SK-N-SH (cell line): ENCODE measurements at regions of chr16 and their contacts with region 1.

Region 1: GRCh38 chr16:85114909-85115567 is 2.8 kb upstream of the CIBAR2 start:
- DNase-seq: peak; percentile 92
- H3K4me3 ChIP-seq: peak overlapping the region in 1 of 2 experiments; percentile 39; a peak in 1 of 4 replicates
- H3K27ac ChIP-seq: peak overlapping the region; percentile 45 to 61; a peak in 3 of 4 replicates
- H3K4me1 ChIP-seq: peaks cover 0 to 11% of the 10 kb centered on the region in 2 experiments; a peak in 2 of 4 replicates
- H3K27me3 ChIP-seq: no peaks in the 10 kb centered on the region
- CTCF ChIP-seq: peak; percentile 98
- EP300 ChIP-seq: no peak
- RAD21 ChIP-seq: peak; percentile 99

Region 2: GRCh38 chr16:85094812-85095211 is 20.2 kb before region 1 on chr16:
- CTCF ChIA-PET with region 1: interaction called, 14 read pairs
- POLR2A ChIA-PET with region 1: no interaction called
- DNase-seq: peak; percentile 27
- H3K4me3 ChIP-seq: no peak overlapping the region
- H3K27ac ChIP-seq: no peak overlapping the region
- H3K4me1 ChIP-seq: peaks cover 0 to 4% of the 10 kb centered on the region in 2 experiments; a peak in 1 of 4 replicates
- H3K27me3 ChIP-seq: peaks cover 11% of the 10 kb centered on the region
- CTCF ChIP-seq: no peak
- EP300 ChIP-seq: no peak
- RAD21 ChIP-seq: no peak

Region 3: GRCh38 chr16:85137323-85138072 is 22.5 kb after region 1 on chr16:
- CTCF ChIA-PET with region 1: interaction called, 14 read pairs
- POLR2A ChIA-PET with region 1: no interaction called
- DNase-seq: peak; percentile 96
- H3K4me3 ChIP-seq: peak overlapping the region; percentile 29 to 45
- H3K27ac ChIP-seq: peak overlapping the region; percentile 20 to 86; a peak in 3 of 4 replicates
- H3K4me1 ChIP-seq: peaks cover 0 to 25% of the 10 kb centered on the region in 2 experiments; a peak in 3 of 4 replicates
- H3K27me3 ChIP-seq: no peaks in the 10 kb centered on the region
- CTCF ChIP-seq: no peak
- EP300 ChIP-seq: peak in 1 of 2 experiments; percentile 91; a peak in 2 of 4 replicates
- RAD21 ChIP-seq: no peak

Region 4: GRCh38 chr16:85172455-85173145 is 57.6 kb after region 1 on chr16:
- CTCF ChIA-PET with region 1: interaction called, 75 read pairs
- POLR2A ChIA-PET with region 1: no interaction called
- DNase-seq: peak; percentile 83
- H3K4me3 ChIP-seq: peak overlapping the region; percentile 52 to 65
- H3K27ac ChIP-seq: peak overlapping the region; percentile 88 to 97
- H3K4me1 ChIP-seq: peaks cover 26 to 73% of the 10 kb centered on the region in 2 experiments
- H3K27me3 ChIP-seq: no peaks in the 10 kb centered on the region
- CTCF ChIP-seq: peak; percentile 53
- EP300 ChIP-seq: no peak
- RAD21 ChIP-seq: peak; percentile 44

Region 5: DNA sequence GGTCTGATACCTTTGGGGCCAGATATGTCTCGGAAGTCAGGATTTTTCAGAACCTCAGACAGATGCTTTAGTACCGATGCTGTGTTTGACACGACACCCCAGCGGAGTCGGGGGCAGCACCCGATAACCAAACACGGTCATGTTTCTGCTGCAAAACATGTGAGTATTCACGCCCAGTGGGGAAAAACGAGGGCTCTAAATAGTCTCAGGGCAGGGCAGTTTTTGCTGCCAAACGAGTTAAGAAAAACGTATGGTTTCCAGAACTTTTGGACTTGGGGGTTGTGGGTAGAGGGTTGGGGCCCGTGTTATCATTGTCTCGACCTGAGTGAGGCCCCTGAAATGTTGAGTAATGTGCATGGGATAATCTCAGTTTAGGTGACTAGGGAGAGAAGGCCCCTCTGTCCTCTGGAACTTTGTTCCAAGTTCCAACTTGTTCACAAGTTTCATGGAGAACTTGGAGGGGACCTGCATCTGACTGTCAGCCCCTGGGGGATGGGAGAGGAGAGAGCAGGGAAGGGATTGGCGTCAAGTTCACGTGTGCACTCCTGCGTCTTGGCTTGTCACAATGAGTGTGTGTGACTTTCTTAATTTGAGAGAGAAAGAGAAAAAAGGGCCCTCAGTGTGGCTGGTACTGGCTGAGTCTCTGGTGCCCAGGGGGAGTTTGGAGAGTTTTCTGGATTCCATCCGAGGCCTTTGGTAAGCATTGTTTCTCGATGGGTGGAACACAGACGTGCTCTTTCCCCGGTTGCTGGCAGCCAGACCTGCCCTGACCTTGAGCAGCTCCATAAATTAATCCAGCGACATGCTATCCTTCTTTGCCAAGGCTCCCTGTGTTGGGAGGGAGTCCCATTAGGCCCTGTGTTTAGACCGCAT is 81.1 kb after region 1 on chr16:
- CTCF ChIA-PET with region 1: interaction called, 13 read pairs
- POLR2A ChIA-PET with region 1: no interaction called
- DNase-seq: peak; percentile 70
- H3K4me3 ChIP-seq: no peak overlapping the region
- H3K27ac ChIP-seq: peak overlapping the region in 1 of 2 experiments; percentile 79; a peak in 2 of 4 replicates
- H3K4me1 ChIP-seq: peaks cover 0 to 43% of the 10 kb centered on the region in 2 experiments; a peak in 2 of 4 replicates
- H3K27me3 ChIP-seq: no peaks in the 10 kb centered on the region
- CTCF ChIP-seq: no peak
- EP300 ChIP-seq: peak in 1 of 2 experiments; percentile 76; a peak in 2 of 4 replicates
- RAD21 ChIP-seq: no peak

Region 6: DNA sequence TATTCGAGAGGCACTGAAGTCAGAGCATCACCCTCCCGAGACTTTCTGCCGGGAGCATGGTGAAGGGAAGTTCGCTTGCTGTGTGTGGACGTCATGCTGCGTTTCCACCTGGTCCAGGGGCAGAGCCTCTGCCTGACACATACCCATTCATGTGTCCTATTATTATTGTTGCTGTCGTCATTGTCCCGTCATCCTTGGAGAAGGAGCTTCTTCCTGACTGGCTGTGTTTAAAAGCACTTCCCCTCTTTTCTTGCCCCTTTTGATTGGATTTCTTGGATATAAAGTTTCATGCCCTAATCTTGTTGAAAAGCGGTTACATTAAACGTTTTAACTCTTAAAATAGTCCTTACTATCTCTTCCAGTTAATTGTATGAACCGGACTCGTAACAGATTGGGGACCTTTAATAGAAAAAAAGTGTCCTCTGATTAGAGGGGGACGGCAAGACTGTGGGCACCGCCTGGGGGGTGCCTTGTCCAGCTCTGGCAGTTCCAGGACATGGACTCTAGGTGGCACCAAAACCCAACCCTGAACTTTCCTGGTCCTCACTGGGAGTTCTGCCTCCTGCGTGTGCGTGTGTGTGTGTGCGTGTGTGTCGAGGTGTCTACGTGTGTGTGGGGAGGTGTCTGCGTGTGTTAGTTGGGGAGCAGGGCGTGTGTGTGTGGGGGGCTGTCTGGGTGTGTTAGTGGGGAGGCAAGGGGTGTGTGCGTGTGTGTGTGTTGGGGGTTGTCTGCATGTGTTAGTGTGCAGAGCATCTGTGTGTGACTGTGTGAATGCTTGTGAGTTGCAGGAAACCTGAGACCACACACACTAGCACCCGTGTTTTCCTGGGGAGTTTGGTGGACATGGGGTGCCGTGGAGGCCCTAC is 130.5 kb after region 1 on chr16:
- CTCF ChIA-PET with region 1: interaction called, 32 read pairs
- POLR2A ChIA-PET with region 1: interaction called, 5 read pairs
- DNase-seq: peak; percentile 82
- H3K4me3 ChIP-seq: no peak overlapping the region; a peak in 1 of 4 replicates
- H3K27ac ChIP-seq: peak overlapping the region in 1 of 2 experiments; percentile 59; a peak in 2 of 4 replicates
- H3K4me1 ChIP-seq: peaks cover 0 to 56% of the 10 kb centered on the region in 2 experiments; a peak in 1 of 4 replicates
- H3K27me3 ChIP-seq: no peaks in the 10 kb centered on the region
- CTCF ChIP-seq: peak; percentile 88
- EP300 ChIP-seq: no peak
- RAD21 ChIP-seq: peak; percentile 89

Region 7: DNA sequence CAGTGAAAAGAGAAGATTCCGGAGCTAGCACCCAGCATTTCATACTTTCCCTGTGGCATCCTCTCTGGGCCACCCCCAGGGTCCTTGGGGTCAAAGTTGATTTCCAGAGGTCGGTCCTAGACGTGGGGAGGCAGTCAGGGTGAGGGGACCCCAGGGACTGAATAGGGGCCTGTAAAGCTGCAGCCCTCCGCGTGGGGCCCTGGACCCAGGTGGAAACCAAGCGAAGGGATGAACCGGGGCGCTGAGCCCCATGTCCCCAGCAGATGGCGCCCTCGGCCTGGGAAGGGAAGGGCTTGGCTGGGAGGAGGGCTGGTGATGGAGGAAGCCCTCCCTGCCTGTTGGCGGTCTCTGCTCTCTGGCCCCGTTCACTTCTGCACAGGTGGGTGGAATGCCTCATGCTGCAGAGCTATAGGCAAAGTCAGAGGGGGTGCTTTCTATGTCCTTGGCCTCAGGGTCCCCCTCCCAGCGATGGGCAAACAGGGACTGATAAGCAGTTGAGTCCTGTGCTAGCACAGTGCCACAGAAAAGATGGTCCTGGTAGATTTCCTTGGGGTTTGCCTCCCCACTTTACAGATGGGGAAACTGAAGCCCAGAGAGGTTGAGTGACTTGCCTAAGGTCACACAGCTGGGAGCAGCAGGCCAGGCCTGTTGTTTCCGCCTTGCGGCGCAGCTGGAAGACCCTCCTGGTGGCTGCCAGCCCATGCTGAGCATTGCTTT is 160.7 kb after region 1 on chr16:
- CTCF ChIA-PET with region 1: interaction called, 25 read pairs
- POLR2A ChIA-PET with region 1: no interaction called
- DNase-seq: peak; percentile 95
- H3K4me3 ChIP-seq: peak overlapping the region in 1 of 2 experiments; percentile 21; a peak in 1 of 4 replicates
- H3K27ac ChIP-seq: peak overlapping the region in 1 of 2 experiments; percentile 31; a peak in 1 of 4 replicates
- H3K4me1 ChIP-seq: peaks cover 0 to 46% of the 10 kb centered on the region in 2 experiments; a peak in 2 of 4 replicates
- H3K27me3 ChIP-seq: no peaks in the 10 kb centered on the region
- CTCF ChIP-seq: peak; percentile 88
- EP300 ChIP-seq: no peak
- RAD21 ChIP-seq: peak; percentile 94